ENCODE measurements at regions of chr12 and their contacts with region 1.

Region 1: GRCh38 chr12:30754709-30755394 is at the start of gene CAPRIN2:
- DNase-seq: peak; percentile 89 to 97 (median 92)
- ATAC-seq: peak; percentile 96
- H3K4me3 ChIP-seq: peak within 1 kb of the TSS; percentile 67
- H3K4me3 Mint-ChIP-seq: peak within 1 kb of the TSS; percentile 93 to 99 (median 96)
- H3K27ac ChIP-seq: peak within 1 kb of the TSS; percentile 63
- H3K27ac Mint-ChIP-seq: peak within 1 kb of the TSS; percentile 80 to 93 (median 90)
- H3K4me1 ChIP-seq: peaks cover 13 to 29% of the 10 kb centered on the region in 2 donors
- H3K4me1 Mint-ChIP-seq: peaks cover 22 to 53% (median 46%) of the 10 kb centered on the region in 7 donors
- H3K27me3 ChIP-seq: no peaks in the 10 kb centered on the region
- H3K27me3 Mint-ChIP-seq: no peaks in the 10 kb centered on the region
- total RNA-seq, gene CAPRIN2: 13.7 to 50.1 (median 28.9) TPM

Region 2: GRCh38 chr12:29103539-29103974 is 1651.3 kb before region 1 on chr12:
- CTCF ChIA-PET with region 1: no interaction called
- POLR2A ChIA-PET with region 1: no interaction called
- intact Hi-C with region 1: loop called in 1 of 2 experiments (anchors 1 kb)
- DNase-seq: peak in 8 of 9 donors; percentile 41 to 82 (median 76)
- ATAC-seq: peak; percentile 95
- H3K4me3 ChIP-seq: peak overlapping the region; percentile 21
- H3K4me3 Mint-ChIP-seq: peak overlapping the region; percentile 71 to 91 (median 78)
- H3K27ac ChIP-seq: peak overlapping the region; percentile 74
- H3K27ac Mint-ChIP-seq: peak overlapping the region; percentile 91 to 99 (median 97)
- H3K4me1 ChIP-seq: peaks cover 23 to 33% of the 10 kb centered on the region in 2 donors
- H3K4me1 Mint-ChIP-seq: peaks cover 30 to 54% (median 46%) of the 10 kb centered on the region in 7 donors
- H3K27me3 ChIP-seq: no peaks in the 10 kb centered on the region
- H3K27me3 Mint-ChIP-seq: peaks cover 0 to 23% (median 0%) of the 10 kb centered on the region in 5 donors

Region 3: DNA sequence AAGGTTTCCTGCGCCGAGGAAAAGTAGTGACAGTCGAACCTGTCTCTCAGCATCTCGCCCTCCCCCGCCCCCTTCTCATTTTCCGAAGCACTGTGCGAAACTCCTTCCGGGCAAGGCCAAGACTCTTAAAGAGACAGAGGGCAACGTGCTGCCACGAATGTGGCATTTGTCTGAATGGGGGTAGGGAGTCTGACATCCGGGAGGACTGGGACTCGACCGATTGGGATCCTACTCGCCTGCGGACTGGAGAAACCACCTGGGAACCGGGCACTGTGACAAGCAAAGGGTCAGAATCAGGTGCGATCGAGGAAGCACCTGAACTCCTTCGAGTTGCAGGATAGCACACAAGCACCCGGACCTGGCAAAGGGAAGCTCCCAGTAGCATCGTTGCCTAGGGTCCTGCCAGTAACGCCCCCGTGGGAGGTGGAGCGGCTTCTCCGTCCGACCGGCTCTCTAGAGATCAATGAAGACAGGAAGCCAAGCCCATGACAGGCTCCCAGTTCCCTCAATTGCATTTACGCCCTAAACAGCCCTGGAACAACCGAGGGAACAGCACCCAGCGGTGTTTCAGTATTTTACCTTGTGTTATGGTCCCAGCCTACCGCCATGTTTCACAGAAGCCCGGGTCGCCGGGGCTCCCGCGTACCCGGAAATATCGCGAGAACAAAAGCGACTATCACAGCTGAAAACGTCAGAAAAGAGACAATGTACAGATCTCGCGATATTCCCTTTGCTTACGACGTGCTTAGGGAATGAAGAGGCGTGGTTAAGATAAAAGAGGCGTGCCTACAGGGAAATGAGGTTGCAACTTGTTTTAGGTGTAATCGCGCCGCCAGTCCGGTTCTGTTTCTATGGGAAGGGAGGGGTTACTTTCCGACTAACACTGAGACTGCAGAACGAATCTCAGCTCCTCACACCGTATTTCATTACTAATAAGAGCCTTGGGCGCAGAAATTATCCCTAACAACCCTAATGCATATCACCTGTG is 1374.0 kb before region 1 on chr12 and contains the start of gene ERGIC2:
- CTCF ChIA-PET with region 1: no interaction called
- POLR2A ChIA-PET with region 1: interaction called, 3 read pairs
- intact Hi-C with region 1: loop called (anchors 1 kb)
- DNase-seq: peak; percentile 63 to 97 (median 95)
- ATAC-seq: peak; percentile 97
- H3K4me3 ChIP-seq: peak within 1 kb of the TSS; percentile 98
- H3K4me3 Mint-ChIP-seq: peak within 1 kb of the TSS; percentile 88 to 97 (median 94)
- H3K27ac ChIP-seq: peak within 1 kb of the TSS; percentile 91
- H3K27ac Mint-ChIP-seq: peak within 1 kb of the TSS; percentile 92 to 98 (median 96)
- H3K4me1 ChIP-seq: peaks cover 9 to 12% of the 10 kb centered on the region in 2 donors
- H3K4me1 Mint-ChIP-seq: peaks cover 20 to 63% (median 46%) of the 10 kb centered on the region in 7 donors
- H3K27me3 ChIP-seq: no peaks in the 10 kb centered on the region
- H3K27me3 Mint-ChIP-seq: no peaks in the 10 kb centered on the region
- total RNA-seq, gene ERGIC2: 36.0 to 85.7 (median 78.6) TPM

Region 4: GRCh38 chr12:30695199-30696103 is 59.4 kb before region 1 on chr12 and contains the start of gene IPO8:
- CTCF ChIA-PET with region 1: interaction called, 8 read pairs
- POLR2A ChIA-PET with region 1: interaction called, 10 read pairs
- intact Hi-C with region 1: loop called (anchors 1 kb)
- DNase-seq: peak; percentile 61 to 83 (median 76)
- ATAC-seq: peak; percentile 97
- H3K4me3 ChIP-seq: peak within 1 kb of the TSS; percentile 94
- H3K4me3 Mint-ChIP-seq: peak within 1 kb of the TSS; percentile 93 to 100 (median 96)
- H3K27ac ChIP-seq: peak within 1 kb of the TSS; percentile 78
- H3K27ac Mint-ChIP-seq: peak within 1 kb of the TSS; percentile 91 to 98 (median 94)
- H3K4me1 ChIP-seq: peaks cover 22 to 28% of the 10 kb centered on the region in 2 donors
- H3K4me1 Mint-ChIP-seq: peaks cover 27 to 52% (median 45%) of the 10 kb centered on the region in 7 donors
- H3K27me3 ChIP-seq: no peaks in the 10 kb centered on the region
- H3K27me3 Mint-ChIP-seq: peaks cover 0 to 6% (median 4%) of the 10 kb centered on the region in 5 donors
- total RNA-seq, gene IPO8: 30.4 to 59.2 (median 44.4) TPM

Region 5: DNA sequence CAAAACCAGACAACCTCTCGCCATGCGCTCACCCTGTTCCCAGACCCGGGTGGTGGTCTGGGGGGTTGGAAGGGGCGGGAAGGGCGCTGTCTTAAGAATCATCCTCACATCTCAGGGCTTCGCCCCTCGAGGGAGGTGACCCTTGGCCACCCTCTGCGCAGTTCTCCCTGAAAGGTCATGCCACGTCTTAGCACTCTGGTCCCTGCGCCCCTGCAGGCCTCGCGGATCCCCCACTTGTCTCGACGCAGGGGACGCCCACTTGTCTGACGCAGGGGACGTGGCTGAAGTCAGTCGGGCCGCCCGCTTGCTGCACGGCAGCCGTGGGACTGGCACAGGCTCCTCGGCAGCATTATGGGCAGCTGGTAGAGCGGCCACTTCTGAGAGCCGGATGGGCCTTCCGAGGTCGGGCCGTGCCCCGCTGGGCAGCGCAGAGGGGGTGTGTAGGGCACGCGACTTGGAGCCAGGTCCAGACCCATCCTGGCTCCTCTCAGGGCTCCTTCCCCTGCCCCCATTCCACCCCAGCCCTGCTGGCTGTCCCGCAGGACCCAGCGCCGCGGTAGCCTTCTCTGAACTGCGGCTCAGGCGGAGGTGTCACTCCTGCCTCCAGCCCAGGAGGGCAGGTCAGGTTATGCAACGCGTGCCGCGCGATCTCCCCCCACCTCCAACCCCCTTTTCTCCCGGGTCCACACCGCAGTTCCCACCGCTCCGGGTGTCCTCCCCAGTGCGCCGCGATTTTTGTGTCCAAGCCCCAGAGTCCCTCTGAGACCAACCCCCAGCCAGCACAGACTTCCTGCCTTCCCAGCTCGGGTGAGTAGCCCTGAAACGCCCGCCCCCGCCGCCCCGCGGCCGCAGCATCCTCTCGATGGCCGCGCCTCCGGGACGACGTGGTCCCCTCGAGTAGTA is 40.8 kb after region 1 on chr12:
- CTCF ChIA-PET with region 1: interaction called, 3 read pairs
- POLR2A ChIA-PET with region 1: interaction called, 3 read pairs
- intact Hi-C with region 1: loop called in 1 of 2 experiments (anchors 2 kb)
- DNase-seq: peak in 6 of 9 donors; percentile 5 to 64 (median 14)
- ATAC-seq: peak; percentile 76
- H3K4me3 ChIP-seq: peak overlapping the region; percentile 47
- H3K4me3 Mint-ChIP-seq: peak overlapping the region in 8 of 10 donors; percentile 39 to 84 (median 72)
- H3K27ac ChIP-seq: no peak overlapping the region
- H3K27ac Mint-ChIP-seq: no peak overlapping the region
- H3K4me1 ChIP-seq: no peaks in the 10 kb centered on the region
- H3K4me1 Mint-ChIP-seq: peaks cover 10 to 20% (median 15%) of the 10 kb centered on the region in 7 donors
- H3K27me3 ChIP-seq: peaks cover 0 to 3% of the 10 kb centered on the region in 2 donors
- H3K27me3 Mint-ChIP-seq: peaks cover 36 to 65% (median 48%) of the 10 kb centered on the region in 5 donors

Region 6: DNA sequence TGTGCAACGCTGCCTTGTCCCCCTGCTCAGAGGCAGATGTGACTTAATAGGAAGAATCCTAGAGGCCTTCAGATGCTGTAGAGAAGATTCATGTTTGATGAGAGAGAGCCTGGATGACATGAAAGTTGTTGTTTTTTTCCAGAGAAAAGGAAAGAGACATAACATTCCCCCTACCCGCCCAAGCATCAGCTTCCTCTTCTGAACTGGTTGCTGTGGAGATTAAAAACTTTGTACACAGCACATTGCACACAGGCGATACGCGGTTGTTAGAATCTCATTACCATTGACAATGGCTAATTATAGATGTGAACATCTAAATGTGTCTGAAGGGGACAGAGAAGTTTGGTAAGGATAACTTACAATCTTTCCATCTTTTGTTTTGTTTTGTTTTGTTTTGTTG is 891.1 kb after region 1 on chr12:
- CTCF ChIA-PET with region 1: no interaction called
- POLR2A ChIA-PET with region 1: no interaction called
- intact Hi-C with region 1: no loop called
- DNase-seq: no peak
- ATAC-seq: no peak
- H3K4me3 ChIP-seq: no peak overlapping the region
- H3K4me3 Mint-ChIP-seq: no peak overlapping the region
- H3K27ac ChIP-seq: no peak overlapping the region
- H3K27ac Mint-ChIP-seq: no peak overlapping the region
- H3K4me1 ChIP-seq: no peaks in the 10 kb centered on the region
- H3K4me1 Mint-ChIP-seq: peaks cover 0 to 6% (median 0%) of the 10 kb centered on the region in 7 donors
- H3K27me3 ChIP-seq: no peaks in the 10 kb centered on the region
- H3K27me3 Mint-ChIP-seq: no peaks in the 10 kb centered on the region

Measured in naive thymus-derived CD4-positive, alpha-beta T cell (primary cell).